Testis (tissue), 5 donors: ENCODE measurements at regions of chr9 and their contacts with region 1.

Region 1: DNA sequence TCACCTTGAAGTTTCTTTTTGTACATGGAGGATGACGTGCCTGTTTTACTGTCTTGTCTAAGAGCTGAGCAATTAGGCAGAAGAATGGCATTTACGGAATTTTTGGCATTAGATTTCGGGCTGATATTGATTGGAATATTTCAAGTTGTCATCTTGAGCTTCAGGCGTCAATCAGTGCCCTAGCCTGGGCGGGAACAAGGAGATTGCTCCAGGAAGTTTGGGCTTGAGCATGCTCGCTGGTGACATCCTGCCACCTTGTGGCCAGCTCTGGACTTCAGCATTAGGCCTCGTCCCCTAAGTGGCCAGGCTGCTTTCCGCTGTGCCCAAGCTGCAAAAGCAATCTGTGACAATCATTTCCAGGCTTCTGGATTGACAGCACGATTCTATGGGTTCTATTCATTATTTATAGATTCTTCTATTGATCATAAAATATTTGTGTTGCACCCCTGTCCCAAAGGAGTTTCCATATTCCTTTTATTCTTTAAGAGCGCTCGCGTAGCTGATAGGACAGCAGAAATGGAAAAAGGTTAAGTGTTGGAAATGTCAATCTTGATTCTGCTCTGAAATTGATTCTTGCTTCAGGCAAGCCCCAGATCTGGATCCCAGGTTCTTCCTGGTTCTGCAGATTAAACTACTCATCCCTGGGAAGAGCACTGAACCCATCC is 79.3 kb downstream of the SLC28A3 start:
- DNase-seq: peak; percentile 93
- H3K4me3 ChIP-seq: no peak overlapping the region
- H3K27ac ChIP-seq: no peak overlapping the region
- H3K4me1 ChIP-seq: peaks cover 12% of the 10 kb centered on the region
- H3K27me3 ChIP-seq: no peaks in the 10 kb centered on the region
- CTCF ChIP-seq: peak; percentile 87 to 90 (median 88)
- POLR2A ChIP-seq: no peak

Region 2: DNA sequence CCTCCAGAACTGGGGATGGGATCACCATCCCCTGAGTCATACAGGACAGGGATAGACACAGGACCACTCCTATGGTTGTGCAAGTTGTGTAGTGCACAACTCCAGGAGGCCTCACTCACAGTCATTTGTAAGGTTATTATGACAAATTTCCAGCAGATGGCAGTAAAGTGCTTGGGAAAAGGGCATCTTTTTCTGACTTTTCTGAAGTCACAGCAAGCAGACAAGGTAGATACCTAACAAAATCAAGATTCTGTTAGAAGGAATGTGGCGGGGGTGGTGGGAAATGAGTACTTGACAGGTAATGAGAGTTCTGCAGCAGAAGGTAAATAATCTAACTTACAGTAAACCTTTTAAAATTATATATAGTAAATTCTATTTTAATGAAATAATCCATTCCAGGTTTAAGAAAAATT is 323.3 kb before region 1 on chr9:
- intact Hi-C with region 1: loop called (anchors 5 kb)
- DNase-seq: no peak
- H3K4me3 ChIP-seq: no peak overlapping the region
- H3K27ac ChIP-seq: no peak overlapping the region
- H3K4me1 ChIP-seq: peaks cover 4% of the 10 kb centered on the region
- H3K27me3 ChIP-seq: no peaks in the 10 kb centered on the region
- CTCF ChIP-seq: peak; percentile 45 to 71 (median 60)
- POLR2A ChIP-seq: no peak

Region 3: GRCh38 chr9:84357275-84357674 is 96.1 kb after region 1 on chr9:
- intact Hi-C with region 1: no loop called
- DNase-seq: no peak
- H3K4me3 ChIP-seq: no peak overlapping the region
- H3K27ac ChIP-seq: no peak overlapping the region
- H3K4me1 ChIP-seq: no peaks in the 10 kb centered on the region
- H3K27me3 ChIP-seq: no peaks in the 10 kb centered on the region
- CTCF ChIP-seq: no peak
- POLR2A ChIP-seq: no peak

Region 4: DNA sequence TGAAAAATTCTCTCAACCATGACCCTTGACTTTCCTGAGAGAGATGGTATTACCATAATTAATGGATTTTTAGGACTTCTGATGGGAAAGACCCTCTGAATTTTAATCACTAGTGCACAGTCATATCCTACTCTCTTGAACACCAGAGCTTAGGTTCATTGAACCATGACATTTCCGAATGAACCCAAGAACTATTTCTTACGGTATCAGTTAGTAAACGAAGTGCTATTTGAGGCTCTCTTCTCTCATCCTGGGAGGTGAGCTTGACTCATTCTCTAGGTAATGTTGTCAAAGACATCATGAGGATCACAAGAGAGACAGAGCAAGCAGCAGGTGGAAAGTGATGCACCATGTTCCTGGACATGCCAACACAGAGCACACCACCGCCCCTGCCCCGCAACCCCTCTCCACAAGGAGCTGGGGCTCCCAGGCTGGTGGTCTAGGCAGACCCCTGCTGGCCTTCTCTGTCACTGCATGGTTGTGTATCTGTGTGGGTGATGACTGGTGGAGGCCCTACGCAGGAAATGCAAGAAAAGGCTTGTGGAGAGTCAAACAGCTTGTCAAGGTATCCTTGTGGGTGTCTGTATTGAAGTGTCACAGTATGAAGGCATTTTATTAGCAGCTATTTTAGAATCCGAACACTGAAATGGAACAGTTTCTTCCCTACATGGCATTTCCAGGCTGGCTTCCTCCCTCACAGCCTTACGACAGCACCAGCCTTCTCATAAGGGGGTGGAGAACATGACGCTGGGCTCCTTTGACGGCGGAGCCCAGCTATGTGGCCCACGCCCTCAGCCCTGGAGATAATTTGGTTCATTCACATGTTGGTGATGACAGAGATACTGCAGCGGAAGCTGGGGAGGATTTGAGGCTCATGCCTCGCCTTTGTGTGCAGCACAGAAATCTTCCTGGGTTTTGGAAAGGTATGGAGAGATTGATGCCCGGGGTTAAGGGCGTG is 705.9 kb after region 1 on chr9:
- intact Hi-C with region 1: no loop called
- DNase-seq: no peak
- H3K4me3 ChIP-seq: no peak overlapping the region
- H3K27ac ChIP-seq: no peak overlapping the region
- H3K4me1 ChIP-seq: no peaks in the 10 kb centered on the region
- H3K27me3 ChIP-seq: no peaks in the 10 kb centered on the region
- CTCF ChIP-seq: no peak
- POLR2A ChIP-seq: no peak